ENCODE measurements at regions of chr11 and their contacts with region 1.

Region 1: GRCh38 chr11:9527481-9528140 is 45.9 kb upstream of the WEE1 start:
- DNase-seq: no peak
- H3K4me3 ChIP-seq: no peak overlapping the region
- H3K27ac ChIP-seq: peak overlapping the region; percentile 84 to 87 (median 85)
- H3K4me1 ChIP-seq: peaks cover 16 to 61% (median 47%) of the 10 kb centered on the region in 4 donors
- H3K27me3 ChIP-seq: no peaks in the 10 kb centered on the region
- CTCF ChIP-seq: no peak
- EP300 ChIP-seq: no peak
- POLR2A ChIP-seq: no peak

Region 2: GRCh38 chr11:9573052-9573774 is 45.6 kb after region 1 on chr11 and contains the start of gene WEE1:
- in situ Hi-C with region 1: no loop called
- intact Hi-C with region 1: loop called (anchors 5 kb)
- DNase-seq: peak; percentile 99
- H3K4me3 ChIP-seq: peak within 1 kb of the TSS; percentile 75 to 96 (median 90)
- H3K27ac ChIP-seq: peak within 1 kb of the TSS; percentile 97 to 98 (median 98)
- H3K4me1 ChIP-seq: peaks cover 16 to 56% (median 39%) of the 10 kb centered on the region in 4 donors
- H3K27me3 ChIP-seq: no peaks in the 10 kb centered on the region
- CTCF ChIP-seq: no peak
- EP300 ChIP-seq: no peak
- POLR2A ChIP-seq: peak; percentile 92
- total RNA-seq, gene WEE1: 7.9 to 48.2 (median 31.8) TPM

Measured in transverse colon (tissue), 4 donors.